ENCODE measurements at regions of chr20 and their contacts with region 1.

Region 1: DNA sequence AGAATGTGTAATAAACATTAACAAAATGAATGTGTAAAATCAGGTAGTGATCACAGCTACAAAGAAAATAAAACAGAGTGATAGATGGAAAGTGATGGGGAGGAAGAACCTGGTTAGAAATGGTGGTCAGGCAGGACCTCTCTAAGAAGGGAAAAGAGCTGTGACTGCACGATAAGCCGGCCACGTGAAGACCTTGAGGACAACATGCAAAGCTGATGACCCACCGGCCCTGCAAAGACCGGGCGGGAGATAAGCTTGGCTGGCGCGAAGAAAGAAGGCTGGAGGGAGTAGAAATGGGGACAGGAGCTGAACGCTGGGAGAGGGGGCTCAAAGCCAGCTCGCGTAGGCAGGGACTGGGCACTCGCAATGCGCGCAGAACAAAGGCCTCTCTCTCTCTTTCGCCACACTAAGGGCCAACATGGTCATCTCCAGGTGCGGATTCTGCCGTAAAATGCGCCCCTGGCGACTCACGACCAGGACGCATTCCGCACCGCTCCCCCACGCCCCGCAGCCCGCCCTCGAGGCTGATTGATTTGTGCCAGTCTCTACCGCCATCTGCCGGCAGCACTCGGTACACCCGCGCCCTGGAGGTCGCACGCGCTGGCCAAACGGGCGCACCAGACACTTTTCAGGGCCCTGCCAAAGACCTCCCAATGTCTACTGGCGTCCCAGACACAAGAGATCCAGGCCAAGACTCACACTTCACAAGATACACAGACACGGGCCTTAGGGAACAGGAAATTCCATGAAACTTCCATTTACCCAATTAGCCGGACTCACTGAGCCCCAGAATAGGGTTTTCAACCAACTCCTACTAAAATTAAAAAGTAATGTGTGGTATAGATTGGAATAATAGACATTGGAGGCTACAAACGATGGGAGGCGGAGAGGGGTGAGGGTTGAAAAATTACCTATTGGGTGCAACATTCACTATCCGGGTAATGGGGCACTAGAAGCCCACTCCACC is 9.4 kb downstream of the DEFB132 start:
- DNase-seq: peak; percentile 83
- H3K4me3 ChIP-seq: peak overlapping the region; percentile 44
- H3K27ac ChIP-seq: no peak overlapping the region
- H3K4me1 ChIP-seq: peaks cover 5% of the 10 kb centered on the region
- CTCF ChIP-seq: peak; percentile 95

Region 2: GRCh38 chr20:208942-209566 is 57.8 kb before region 1 on chr20:
- CTCF ChIA-PET with region 1: no interaction called
- POLR2A ChIA-PET with region 1: no interaction called
- intact Hi-C with region 1: loop called (anchors 1 kb)
- DNase-seq: peak; percentile 53
- H3K4me3 ChIP-seq: no peak overlapping the region
- H3K27ac ChIP-seq: no peak overlapping the region
- H3K4me1 ChIP-seq: no peaks in the 10 kb centered on the region
- CTCF ChIP-seq: peak; percentile 82

Region 3: DNA sequence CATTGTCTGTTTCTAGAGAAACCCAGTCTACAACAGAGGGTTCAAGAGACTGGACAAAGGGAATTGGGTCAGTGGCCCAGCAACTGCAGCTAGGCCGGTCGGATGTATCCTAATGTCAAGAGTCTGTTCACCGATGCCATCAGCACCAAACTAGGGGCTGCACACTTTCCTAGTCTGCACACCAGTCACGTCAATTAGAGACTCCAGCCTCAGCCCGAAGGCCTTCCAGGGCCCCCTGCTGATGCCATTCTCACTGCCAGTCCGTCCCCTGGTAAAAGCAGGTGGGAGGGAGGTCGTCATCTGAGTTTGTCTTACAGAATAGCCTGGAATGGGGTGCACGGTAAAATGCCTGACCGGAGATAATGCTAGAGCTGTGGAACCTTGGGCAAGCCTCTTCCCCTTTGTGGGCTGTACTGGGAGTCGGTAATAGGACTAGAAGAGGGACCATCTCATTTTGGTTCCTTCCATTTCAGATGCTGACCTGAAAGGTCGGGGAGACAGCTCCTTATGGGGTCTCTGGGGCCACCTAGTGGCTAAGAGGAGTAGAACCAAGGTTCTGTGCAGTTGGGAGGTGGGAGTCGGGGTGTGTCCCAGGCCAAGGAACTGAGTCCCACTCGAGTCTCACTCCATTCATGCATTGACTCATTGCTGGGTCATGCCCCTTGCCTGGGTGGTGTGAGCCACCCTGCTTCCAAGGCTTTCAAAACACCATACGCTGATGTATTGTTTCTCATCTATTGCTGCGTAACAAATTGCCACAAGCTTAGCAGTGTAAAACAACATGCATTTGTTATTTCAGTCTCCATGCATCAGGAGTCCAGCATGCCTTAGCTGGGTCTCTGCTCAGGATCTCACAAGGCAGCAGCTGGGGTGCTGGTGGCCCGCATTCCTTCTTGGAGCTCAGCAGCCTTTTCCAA is 63.6 kb after region 1 on chr20:
- CTCF ChIA-PET with region 1: no interaction called
- POLR2A ChIA-PET with region 1: no interaction called
- intact Hi-C with region 1: loop called (anchors 2 kb)
- DNase-seq: peak; percentile 86
- H3K4me3 ChIP-seq: no peak overlapping the region
- H3K27ac ChIP-seq: no peak overlapping the region
- H3K4me1 ChIP-seq: peaks cover 24% of the 10 kb centered on the region
- CTCF ChIP-seq: peak; percentile 96

Measured in OCI-LY7 (cell line).